ENCODE measurements at regions of chr5 and their contacts with region 1.

Region 1: GRCh38 chr5:153629027-153629895 is 138.8 kb downstream of the GRIA1 start:
- DNase-seq: peak; percentile 92
- H3K4me3 ChIP-seq: no peak overlapping the region
- H3K27ac ChIP-seq: peak overlapping the region; percentile 55
- H3K4me1 ChIP-seq: peaks cover 46% of the 10 kb centered on the region
- H3K27me3 ChIP-seq: no peaks in the 10 kb centered on the region
- CTCF ChIP-seq: peak; percentile 24 to 52

Region 2: DNA sequence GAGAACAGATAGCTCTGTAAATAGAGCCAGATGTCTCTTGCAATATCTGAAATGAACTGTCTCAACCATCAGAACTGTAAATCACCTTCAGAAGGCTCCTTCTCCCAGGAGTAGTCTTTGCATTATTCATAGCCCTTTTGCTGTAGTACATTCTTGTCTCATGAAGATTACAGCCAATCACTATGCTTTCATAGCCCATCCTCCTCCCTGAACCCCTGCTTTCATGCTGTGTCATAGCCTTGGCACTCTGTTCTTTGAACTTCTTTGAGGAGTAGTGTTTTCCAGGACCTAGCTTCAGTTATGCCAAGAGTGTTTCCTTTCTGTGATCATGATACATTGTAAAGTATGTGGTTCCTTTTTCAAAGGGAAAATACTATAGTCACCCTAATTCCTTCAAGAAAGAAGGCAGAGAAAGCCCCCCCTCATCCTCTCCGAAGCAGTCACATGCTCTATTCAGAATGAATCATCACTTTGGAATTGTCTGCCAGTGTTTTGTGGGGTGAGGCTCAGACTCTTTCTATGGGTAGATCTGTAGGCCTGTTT is 77.7 kb before region 1 on chr5:
- CTCF ChIA-PET with region 1: no interaction called
- dilution Hi-C with region 1: no loop called
- in situ Hi-C with region 1: no loop called
- intact Hi-C with region 1: loop called (anchors 5 kb)
- DNase-seq: peak; percentile 91
- H3K4me3 ChIP-seq: no peak overlapping the region
- H3K27ac ChIP-seq: peak overlapping the region; percentile 92
- H3K4me1 ChIP-seq: peaks cover 23% of the 10 kb centered on the region
- H3K27me3 ChIP-seq: no peaks in the 10 kb centered on the region
- CTCF ChIP-seq: no peak

Region 3: DNA sequence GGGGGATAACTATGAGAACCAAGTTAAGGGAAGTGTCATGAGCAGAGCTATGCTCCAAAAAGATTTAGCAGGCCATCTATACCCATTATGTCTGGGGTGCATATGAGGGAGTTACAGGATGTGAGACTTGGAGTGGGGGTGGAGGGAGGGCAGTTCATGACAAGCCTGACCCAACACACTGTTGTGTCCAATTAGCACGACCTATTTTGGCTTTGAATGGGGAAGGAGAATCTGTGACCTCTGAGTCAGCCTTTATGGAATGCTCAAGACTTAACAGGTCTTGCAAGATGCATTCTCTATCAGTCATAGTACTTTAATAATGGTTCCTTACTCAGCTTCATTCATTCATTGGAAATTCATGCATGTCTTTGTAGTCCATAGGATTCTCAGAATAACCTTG is 67.1 kb before region 1 on chr5:
- CTCF ChIA-PET with region 1: no interaction called
- dilution Hi-C with region 1: no loop called
- in situ Hi-C with region 1: no loop called
- intact Hi-C with region 1: loop called (anchors 2 kb)
- DNase-seq: peak; percentile 72
- H3K4me3 ChIP-seq: no peak overlapping the region
- H3K27ac ChIP-seq: no peak overlapping the region
- H3K4me1 ChIP-seq: peaks cover 15% of the 10 kb centered on the region
- H3K27me3 ChIP-seq: no peaks in the 10 kb centered on the region
- CTCF ChIP-seq: no peak

Region 4: GRCh38 chr5:153711755-153712154 is 82.5 kb after region 1 on chr5:
- CTCF ChIA-PET with region 1: no interaction called
- dilution Hi-C with region 1: no loop called
- in situ Hi-C with region 1: no loop called
- intact Hi-C with region 1: loop called (anchors 5 kb)
- DNase-seq: no peak
- H3K4me3 ChIP-seq: no peak overlapping the region
- H3K27ac ChIP-seq: no peak overlapping the region
- H3K4me1 ChIP-seq: no peaks in the 10 kb centered on the region
- H3K27me3 ChIP-seq: no peaks in the 10 kb centered on the region
- CTCF ChIP-seq: peak in 1 of 2 donors; percentile 30

Region 5: DNA sequence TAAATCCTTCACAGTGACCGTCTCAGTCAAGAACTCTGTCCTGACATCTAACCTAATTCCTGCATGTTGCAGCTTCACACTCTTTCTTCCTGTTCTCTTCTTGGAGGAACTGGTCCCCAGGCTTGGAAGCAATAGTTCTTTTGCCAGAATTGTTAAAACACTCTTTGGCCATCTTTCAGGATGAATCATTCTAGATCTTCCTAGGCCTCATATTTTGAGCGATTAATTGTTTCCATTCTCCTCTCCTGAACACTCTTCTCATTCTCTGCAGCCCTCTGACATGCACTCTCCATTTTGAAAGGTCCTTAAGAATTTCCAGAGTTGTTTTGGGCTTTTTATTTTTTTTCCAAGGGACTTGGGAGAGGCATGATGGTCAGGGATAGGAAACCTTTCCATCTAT is 323.6 kb after region 1 on chr5:
- CTCF ChIA-PET with region 1: no interaction called
- dilution Hi-C with region 1: no loop called
- in situ Hi-C with region 1: no loop called
- intact Hi-C with region 1: no loop called
- DNase-seq: no peak
- H3K4me3 ChIP-seq: no peak overlapping the region
- H3K27ac ChIP-seq: no peak overlapping the region
- H3K4me1 ChIP-seq: no peaks in the 10 kb centered on the region
- H3K27me3 ChIP-seq: no peaks in the 10 kb centered on the region
- CTCF ChIP-seq: no peak